OCI-LY7 (cell line): ENCODE measurements at regions of chr7 and their contacts with region 1.

Region 1: GRCh38 chr7:37707754-37708485 is 24.4 kb downstream of the GPR141 start:
- DNase-seq: no peak
- H3K4me3 ChIP-seq: no peak overlapping the region
- H3K27ac ChIP-seq: no peak overlapping the region
- H3K4me1 ChIP-seq: no peaks in the 10 kb centered on the region
- CTCF ChIP-seq: no peak

Region 2: GRCh38 chr7:37683246-37684120 is 24.4 kb before region 1 on chr7 and contains the start of gene GPR141:
- CTCF ChIA-PET with region 1: no interaction called
- POLR2A ChIA-PET with region 1: no interaction called
- intact Hi-C with region 1: no loop called
- DNase-seq: peak; percentile 18
- H3K4me3 ChIP-seq: no peak within 1 kb of the TSS
- H3K27ac ChIP-seq: no peak within 1 kb of the TSS
- H3K4me1 ChIP-seq: peaks cover 7% of the 10 kb centered on the region
- CTCF ChIP-seq: no peak
- total RNA-seq, gene GPR141: not detected in 2 replicates

Region 3: GRCh38 chr7:37724732-37725131 is 16.8 kb after region 1 on chr7:
- CTCF ChIA-PET with region 1: no interaction called
- POLR2A ChIA-PET with region 1: interaction called, 12 read pairs
- intact Hi-C with region 1: no loop called
- DNase-seq: no peak
- H3K4me3 ChIP-seq: no peak overlapping the region
- H3K27ac ChIP-seq: no peak overlapping the region
- H3K4me1 ChIP-seq: no peaks in the 10 kb centered on the region
- CTCF ChIP-seq: no peak